Naive thymus-derived CD8-positive, alpha-beta T cell (primary cell): ENCODE measurements at regions of chr16 and their contacts with region 1.

Region 1: GRCh38 chr16:56988948-56989945 is at the start of gene NLRC5:
- DNase-seq: peak; percentile 80 to 93 (median 88)
- ATAC-seq: peak; percentile 84 to 90
- H3K4me3 Mint-ChIP-seq: peak within 1 kb of the TSS; percentile 94 to 100 (median 100)
- H3K27ac Mint-ChIP-seq: peak within 1 kb of the TSS; percentile 96 to 99 (median 98)
- H3K4me1 Mint-ChIP-seq: peaks cover 53 to 89% (median 74%) of the 10 kb centered on the region in 4 donors
- H3K27me3 Mint-ChIP-seq: no peaks in the 10 kb centered on the region
- polyA plus RNA-seq, gene NLRC5: 70.4 to 137 (median 80.0) TPM

Region 2: DNA sequence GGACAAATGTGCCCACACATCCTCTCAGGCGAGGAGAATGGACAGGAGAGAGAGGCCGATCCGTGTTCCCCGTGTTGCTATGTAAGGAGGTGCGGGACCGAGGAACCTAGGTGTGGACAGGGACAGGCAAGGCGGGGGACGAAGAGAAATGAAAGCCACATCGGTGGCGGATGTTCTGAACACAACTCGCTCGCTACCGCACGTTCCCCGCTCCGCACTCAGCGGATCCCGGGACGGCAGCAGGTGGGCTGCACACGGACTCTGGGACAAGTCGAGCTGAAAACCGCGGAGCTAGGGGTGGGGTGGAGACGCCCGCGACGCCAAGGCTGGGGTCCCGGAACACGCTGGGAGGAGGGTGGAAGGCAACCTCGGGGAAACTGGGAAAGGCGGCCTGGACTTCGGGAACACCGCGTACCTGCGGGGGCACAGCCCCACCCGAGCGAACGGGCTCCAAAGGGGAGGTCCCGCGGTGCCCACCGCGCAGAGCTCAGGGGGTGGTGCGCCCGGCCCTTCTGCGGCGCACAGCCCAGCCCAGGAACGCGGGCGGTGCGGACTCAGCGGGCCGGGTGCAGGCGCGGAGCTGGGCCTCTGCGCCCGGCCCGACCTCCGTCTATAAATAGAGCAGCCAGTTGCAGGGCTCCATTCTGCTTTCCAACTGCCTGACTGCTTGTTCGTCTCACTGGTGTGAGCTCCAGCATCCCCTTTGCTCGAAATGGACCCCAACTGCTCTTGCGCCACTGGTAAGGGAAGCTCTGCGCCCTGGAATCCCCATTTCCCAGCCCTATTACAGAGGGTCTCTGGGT is 363.9 kb before region 1 on chr16 and contains the start of gene MT1E:
- POLR2A ChIA-PET with region 1: no interaction called
- DNase-seq: peak in 7 of 10 donors; percentile 16 to 50 (median 38)
- ATAC-seq: peak; percentile 90 to 93
- H3K4me3 Mint-ChIP-seq: peak within 1 kb of the TSS; percentile 85 to 95 (median 90)
- H3K27ac Mint-ChIP-seq: peak within 1 kb of the TSS; percentile 65 to 93 (median 84)
- H3K4me1 Mint-ChIP-seq: peaks cover 10 to 21% (median 17%) of the 10 kb centered on the region in 4 donors
- H3K27me3 Mint-ChIP-seq: peaks cover 0 to 14% (median 5%) of the 10 kb centered on the region in 5 donors
- polyA plus RNA-seq, gene MT1E: 7.1 to 21.9 (median 10.5) TPM

Region 3: GRCh38 chr16:56911771-56912571 is 77.3 kb before region 1 on chr16:
- POLR2A ChIA-PET with region 1: no interaction called
- DNase-seq: peak in 1 of 10 donors; percentile 38
- ATAC-seq: peak in 1 of 2 donors; percentile 58
- H3K4me3 Mint-ChIP-seq: peak overlapping the region in 1 of 10 donors; percentile 16
- H3K27ac Mint-ChIP-seq: peak overlapping the region in 5 of 10 donors; percentile 41 to 60 (median 51)
- H3K4me1 Mint-ChIP-seq: peaks cover 14 to 58% (median 34%) of the 10 kb centered on the region in 4 donors
- H3K27me3 Mint-ChIP-seq: peaks cover 0 to 3% (median 0%) of the 10 kb centered on the region in 5 donors

Region 4: GRCh38 chr16:56964243-56965148 is 24.8 kb before region 1 on chr16:
- POLR2A ChIA-PET with region 1: interaction called, 231 read pairs
- DNase-seq: peak; percentile 87 to 96 (median 94)
- ATAC-seq: peak; percentile 92 to 94
- H3K4me3 Mint-ChIP-seq: peak overlapping the region in 6 of 10 donors; percentile 1 to 74 (median 50)
- H3K27ac Mint-ChIP-seq: peak overlapping the region; percentile 3 to 94 (median 86)
- H3K4me1 Mint-ChIP-seq: peaks cover 19 to 34% (median 25%) of the 10 kb centered on the region in 4 donors
- H3K27me3 Mint-ChIP-seq: no peaks in the 10 kb centered on the region

Region 5: DNA sequence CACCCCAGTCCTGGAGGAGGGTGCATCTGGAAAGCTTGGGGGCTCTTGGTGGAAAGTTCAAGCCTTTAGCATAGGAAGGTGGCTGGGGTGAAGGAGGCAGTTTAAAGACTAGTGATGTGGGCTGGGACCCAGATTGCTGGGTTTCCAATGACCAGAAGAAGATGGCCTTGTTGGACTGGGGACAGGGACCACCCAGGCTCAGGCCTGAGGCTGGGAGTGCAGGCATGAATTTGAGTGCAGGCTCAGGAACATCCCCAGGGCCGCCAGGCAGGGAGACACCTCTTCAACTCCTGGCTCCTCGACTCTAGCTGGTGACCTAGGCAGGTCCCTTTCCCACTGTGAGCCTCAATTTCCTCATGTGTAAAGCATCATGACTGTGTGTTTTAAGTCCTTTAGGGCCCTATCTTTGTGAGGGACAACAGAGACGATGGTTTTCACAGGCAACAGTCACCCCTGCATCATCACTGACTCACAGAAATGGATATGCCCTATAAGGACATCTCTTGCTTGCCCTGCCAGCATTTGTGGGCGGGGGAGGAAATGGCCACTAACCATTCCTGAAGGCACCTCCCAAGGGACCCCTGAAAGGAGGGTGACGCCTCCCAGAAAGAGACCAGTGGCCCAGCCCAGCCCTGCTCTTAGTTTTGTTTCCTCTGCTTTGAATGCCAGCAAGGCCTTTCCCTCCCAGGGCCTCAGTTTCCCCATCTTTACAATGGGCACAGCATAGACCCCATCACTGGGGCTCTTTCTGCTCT is 11.2 kb after region 1 on chr16:
- POLR2A ChIA-PET with region 1: interaction called, 127 read pairs
- DNase-seq: no peak
- ATAC-seq: peak; percentile 25 to 26
- H3K4me3 Mint-ChIP-seq: peak overlapping the region; percentile 59 to 100 (median 77)
- H3K27ac Mint-ChIP-seq: peak overlapping the region; percentile 90 to 98 (median 96)
- H3K4me1 Mint-ChIP-seq: peaks cover 47 to 97% (median 95%) of the 10 kb centered on the region in 4 donors
- H3K27me3 Mint-ChIP-seq: no peaks in the 10 kb centered on the region

Region 6: DNA sequence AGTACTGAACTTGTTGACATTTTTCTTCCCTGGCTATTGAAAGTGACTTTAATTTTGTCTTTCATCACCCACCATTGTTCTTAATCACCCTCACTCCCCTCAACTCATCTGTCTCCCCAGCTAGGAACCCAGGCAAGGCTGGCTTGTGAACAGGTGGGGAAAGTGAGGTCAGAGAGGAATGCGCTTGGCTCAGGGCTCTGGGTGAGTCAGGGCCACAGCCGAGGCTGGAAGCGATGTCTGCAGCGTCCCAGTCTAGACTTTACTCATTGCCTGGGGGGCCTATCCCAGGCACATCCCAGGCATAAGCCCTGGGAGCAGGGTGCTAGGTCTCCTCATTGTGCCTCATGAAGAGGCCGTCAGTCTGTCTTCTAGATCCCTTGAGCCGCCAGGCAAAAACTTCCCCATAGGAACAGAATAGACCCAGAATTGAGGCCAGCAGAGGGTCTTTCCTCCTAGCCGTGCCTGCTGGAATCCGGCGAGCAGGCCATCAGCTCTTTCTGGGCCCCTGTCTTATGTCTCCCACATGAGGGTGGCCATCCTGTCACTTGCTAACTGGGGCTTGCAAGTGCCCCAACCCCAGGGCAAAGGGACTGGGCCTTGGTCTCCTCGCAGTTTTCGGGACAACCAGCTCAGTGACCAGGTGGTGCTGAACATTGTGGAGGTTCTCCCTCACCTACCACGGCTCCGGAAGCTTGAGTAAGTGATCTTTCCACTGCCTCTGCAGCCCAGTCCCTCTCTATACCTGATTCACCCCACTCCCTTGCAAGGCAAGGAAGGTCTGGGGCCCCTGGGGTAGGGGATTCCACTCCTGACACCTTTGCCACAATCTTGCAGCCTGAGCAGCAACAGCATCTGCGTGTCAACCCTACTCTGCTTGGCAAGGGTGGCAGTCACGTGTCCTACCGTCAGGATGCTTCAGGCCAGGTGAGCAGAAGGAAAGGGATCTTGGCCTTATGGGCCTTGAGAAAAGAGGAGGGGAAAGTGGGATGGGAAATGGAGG is 40.2 kb after region 1 on chr16:
- POLR2A ChIA-PET with region 1: interaction called, 196 read pairs
- DNase-seq: no peak
- ATAC-seq: no peak
- H3K4me3 Mint-ChIP-seq: peak overlapping the region in 2 of 10 donors; percentile 14 to 15
- H3K27ac Mint-ChIP-seq: peak overlapping the region; percentile 28 to 92 (median 80)
- H3K4me1 Mint-ChIP-seq: peaks cover 53 to 93% (median 84%) of the 10 kb centered on the region in 4 donors
- H3K27me3 Mint-ChIP-seq: no peaks in the 10 kb centered on the region

Region 7: DNA sequence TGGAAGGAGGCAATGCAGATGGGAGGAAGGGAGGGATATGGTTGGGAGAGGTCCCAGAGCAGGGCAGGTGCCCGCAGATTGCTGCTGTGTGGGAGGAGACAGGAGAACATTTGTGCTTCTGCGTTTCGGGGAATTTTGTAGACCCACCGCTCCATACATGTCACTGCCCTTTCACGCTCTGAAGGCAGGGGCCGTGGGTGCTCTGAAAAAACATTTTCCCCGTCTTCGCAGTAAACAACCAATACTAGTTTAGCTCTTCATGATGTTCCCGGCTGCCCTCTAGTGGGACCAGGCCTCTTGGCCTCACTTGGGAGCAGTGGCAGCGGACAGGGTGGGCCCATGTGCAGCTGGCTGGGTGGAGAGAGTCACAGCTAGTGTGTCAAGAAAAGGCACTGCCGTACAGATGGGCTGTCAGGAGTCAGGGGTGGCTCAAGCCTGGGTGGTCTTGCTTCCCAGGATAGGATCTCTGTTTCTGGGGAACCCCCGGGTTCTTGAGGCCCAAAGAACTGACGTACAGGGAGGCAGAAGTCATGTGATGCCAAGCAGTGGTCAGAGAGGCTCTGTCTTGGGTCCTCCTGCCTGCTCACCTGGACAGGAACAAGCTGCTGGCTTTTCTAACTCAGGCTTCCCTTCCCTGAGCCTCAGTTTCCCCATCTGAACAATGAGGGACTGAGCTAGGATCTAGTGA is 56.6 kb after region 1 on chr16:
- POLR2A ChIA-PET with region 1: interaction called, 135 read pairs
- DNase-seq: peak in 9 of 10 donors; percentile 28 to 82 (median 42)
- ATAC-seq: peak; percentile 9 to 11
- H3K4me3 Mint-ChIP-seq: peak overlapping the region in 9 of 10 donors; percentile 11 to 65 (median 57)
- H3K27ac Mint-ChIP-seq: peak overlapping the region; percentile 79 to 100 (median 92)
- H3K4me1 Mint-ChIP-seq: peaks cover 26 to 65% (median 58%) of the 10 kb centered on the region in 4 donors
- H3K27me3 Mint-ChIP-seq: no peaks in the 10 kb centered on the region